Endothelial cell of umbilical vein (primary cell): ENCODE measurements at regions of chrX and their contacts with region 1.

Region 1: GRCh38 chrX:107776649-107777535 is 641 bp upstream of the NCBP2L start:
- DNase-seq: peak; percentile 87
- H3K4me3 ChIP-seq: peak overlapping the region in 2 of 3 experiments; percentile 45 to 53
- H3K27ac ChIP-seq: no peak overlapping the region
- H3K4me1 ChIP-seq: peaks cover 10% of the 10 kb centered on the region
- H3K27me3 ChIP-seq: no peaks in the 10 kb centered on the region
- CTCF ChIP-seq: peak; percentile 45 to 48
- POLR2A ChIP-seq: no peak

Region 2: GRCh38 chrX:106894392-106894909 is 882.4 kb before region 1 on chrX:
- CTCF ChIA-PET with region 1: interaction called, 9 read pairs
- POLR2A ChIA-PET with region 1: no interaction called
- dilution Hi-C with region 1: no loop called
- intact Hi-C with region 1: loop called (anchors 5 kb)
- DNase-seq: peak; percentile 57
- H3K4me3 ChIP-seq: no peak overlapping the region
- H3K27ac ChIP-seq: peak overlapping the region; percentile 35
- H3K4me1 ChIP-seq: peaks cover 16% of the 10 kb centered on the region
- H3K27me3 ChIP-seq: no peaks in the 10 kb centered on the region
- CTCF ChIP-seq: peak; percentile 73 to 74
- POLR2A ChIP-seq: no peak

Region 3: GRCh38 chrX:107537815-107538214 is 239.1 kb before region 1 on chrX:
- CTCF ChIA-PET with region 1: interaction called, 12 read pairs
- POLR2A ChIA-PET with region 1: no interaction called
- dilution Hi-C with region 1: no loop called
- intact Hi-C with region 1: loop called (anchors 1 kb)
- DNase-seq: peak; percentile 29
- H3K4me3 ChIP-seq: no peak overlapping the region
- H3K27ac ChIP-seq: no peak overlapping the region
- H3K4me1 ChIP-seq: no peaks in the 10 kb centered on the region
- H3K27me3 ChIP-seq: no peaks in the 10 kb centered on the region
- CTCF ChIP-seq: peak; percentile 22 to 42
- POLR2A ChIP-seq: no peak

Region 4: DNA sequence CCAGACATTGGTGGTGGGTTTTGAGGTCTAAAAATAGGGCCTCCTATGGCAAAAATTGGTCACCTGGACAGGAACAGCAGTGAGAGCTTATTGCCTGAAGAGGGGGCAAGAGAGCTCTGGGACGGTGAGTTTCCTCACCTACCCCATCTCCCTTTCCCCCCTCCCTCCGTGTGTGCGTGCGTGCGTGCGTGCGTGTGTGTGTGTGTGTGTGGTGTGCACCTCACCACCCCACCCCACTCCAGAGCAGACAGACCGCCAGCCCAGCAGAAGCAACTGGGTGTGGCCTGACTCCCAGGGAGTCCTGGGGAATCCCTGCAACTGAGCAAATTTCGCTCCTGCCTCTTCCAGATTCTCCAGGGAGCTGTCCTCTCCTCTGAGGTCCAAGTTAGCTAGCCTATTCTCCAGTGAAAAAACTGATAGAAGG is 103.9 kb before region 1 on chrX:
- CTCF ChIA-PET with region 1: interaction called, 99 read pairs
- POLR2A ChIA-PET with region 1: no interaction called
- dilution Hi-C with region 1: no loop called
- intact Hi-C with region 1: loop called (anchors 1 kb)
- DNase-seq: peak; percentile 60
- H3K4me3 ChIP-seq: no peak overlapping the region
- H3K27ac ChIP-seq: peak overlapping the region; percentile 74
- H3K4me1 ChIP-seq: peaks cover 25% of the 10 kb centered on the region
- H3K27me3 ChIP-seq: no peaks in the 10 kb centered on the region
- CTCF ChIP-seq: peak; percentile 60 to 72
- POLR2A ChIP-seq: no peak

Region 5: GRCh38 chrX:107741404-107741790 is 35.5 kb before region 1 on chrX:
- CTCF ChIA-PET with region 1: interaction called, 7 read pairs
- POLR2A ChIA-PET with region 1: interaction called, 5 read pairs
- dilution Hi-C with region 1: no loop called
- intact Hi-C with region 1: loop called (anchors 1 kb)
- DNase-seq: no peak
- H3K4me3 ChIP-seq: no peak overlapping the region
- H3K27ac ChIP-seq: peak overlapping the region; percentile 2
- H3K4me1 ChIP-seq: peaks cover 14% of the 10 kb centered on the region
- H3K27me3 ChIP-seq: no peaks in the 10 kb centered on the region
- CTCF ChIP-seq: no peak
- POLR2A ChIP-seq: no peak

Region 6: GRCh38 chrX:108070891-108071290 is 294.0 kb after region 1 on chrX:
- CTCF ChIA-PET with region 1: interaction called, 3 read pairs
- POLR2A ChIA-PET with region 1: no interaction called
- dilution Hi-C with region 1: no loop called
- intact Hi-C with region 1: loop called (anchors 1 kb)
- DNase-seq: peak; percentile 29
- H3K4me3 ChIP-seq: no peak overlapping the region
- H3K27ac ChIP-seq: peak overlapping the region; percentile 17
- H3K4me1 ChIP-seq: peaks cover 19% of the 10 kb centered on the region
- H3K27me3 ChIP-seq: no peaks in the 10 kb centered on the region
- CTCF ChIP-seq: no peak
- POLR2A ChIP-seq: no peak